ENCODE measurements at regions of chr7 and their contacts with region 1.

Region 1: GRCh38 chr7:35537067-35538023 is 157.6 kb downstream of the HERPUD2 start:
- DNase-seq: peak; percentile 92
- ATAC-seq: peak; percentile 98

Region 2: GRCh38 chr7:34895202-34895601 is 642.1 kb before region 1 on chr7:
- intact Hi-C with region 1: no loop called
- DNase-seq: no peak
- ATAC-seq: no peak

Region 3: DNA sequence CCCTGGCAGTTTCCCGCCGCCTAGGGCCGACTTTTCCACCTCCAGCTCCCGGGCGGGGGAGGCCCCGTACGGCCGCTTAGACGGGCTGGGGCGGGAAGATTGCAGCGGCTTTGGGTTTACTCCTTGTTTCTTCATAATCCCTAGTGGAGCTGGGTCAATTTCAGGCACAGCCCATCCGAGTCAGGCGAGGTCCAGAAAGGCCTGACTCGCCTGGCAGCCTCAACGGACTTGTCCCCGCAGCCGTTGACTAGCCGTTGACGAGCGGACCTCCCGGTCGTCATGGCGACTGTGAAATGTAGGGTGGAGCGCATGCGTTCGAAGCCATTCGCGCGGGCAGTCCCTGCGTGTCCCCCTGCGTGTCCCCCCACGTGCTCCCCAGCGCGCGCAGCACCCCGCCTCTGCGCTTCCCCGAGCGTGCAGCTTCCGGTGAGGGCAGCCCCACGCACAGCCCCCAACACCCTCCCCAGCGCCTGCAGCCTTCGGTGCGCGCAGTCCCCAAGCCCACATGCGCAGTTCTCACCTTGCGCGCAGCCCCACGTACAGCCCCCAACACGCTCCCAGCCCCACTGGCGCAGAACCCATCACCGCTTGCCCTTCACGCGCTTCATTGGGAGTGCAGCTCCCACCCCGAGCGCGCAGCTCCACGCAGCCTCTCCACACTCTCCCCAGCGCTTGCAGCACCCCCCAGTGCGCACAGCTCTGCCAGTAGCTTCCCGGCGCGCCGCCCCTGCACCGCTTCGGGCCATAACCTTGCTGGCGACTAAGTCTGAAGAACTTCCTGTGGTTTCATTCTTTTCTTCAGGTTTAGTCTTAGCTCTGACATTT is 351.2 kb before region 1 on chr7:
- intact Hi-C with region 1: loop called (anchors 5 kb)
- DNase-seq: peak; percentile 79
- ATAC-seq: peak; percentile 91

Region 4: DNA sequence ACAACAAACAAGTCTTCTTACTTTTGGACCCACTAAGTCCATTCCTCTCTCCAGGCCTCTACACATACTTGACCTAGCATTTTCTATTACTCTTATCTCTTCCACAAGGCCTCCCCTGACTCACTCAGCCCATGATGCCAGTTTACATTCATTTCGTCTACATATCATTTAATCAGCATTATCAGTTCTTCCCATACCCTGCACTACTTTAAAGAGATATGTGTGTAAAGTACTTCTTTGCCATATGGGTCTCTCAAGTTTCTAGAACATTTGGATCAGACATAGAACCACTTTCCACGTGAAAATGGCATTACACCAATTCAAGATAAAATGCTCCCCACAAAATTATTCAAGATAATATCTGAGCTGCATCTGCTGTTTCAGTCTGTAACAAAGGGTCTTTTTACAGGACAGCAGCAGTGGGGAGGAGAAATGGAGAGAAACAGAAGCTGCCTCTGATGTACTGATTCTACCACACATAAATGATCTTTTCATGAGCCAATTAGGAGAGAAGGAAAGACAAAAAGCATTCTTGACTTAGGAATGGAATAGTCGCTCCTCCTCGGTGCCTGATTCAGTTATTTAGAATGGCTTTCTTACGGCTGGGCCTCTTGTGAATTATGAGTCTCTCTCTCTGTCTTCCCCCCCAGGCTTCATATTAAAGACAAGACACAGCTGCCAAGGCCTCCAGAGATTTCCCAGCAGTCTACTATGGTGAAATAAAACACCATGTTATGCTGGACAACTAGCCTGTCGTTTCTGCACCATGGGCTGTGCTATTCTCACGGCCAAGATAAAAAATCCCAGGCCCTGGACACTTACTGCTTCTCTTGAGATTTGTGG is 216.6 kb after region 1 on chr7:
- intact Hi-C with region 1: no loop called
- DNase-seq: peak; percentile 78
- ATAC-seq: peak; percentile 92